Esophagus muscularis mucosa (tissue), 4 donors: ENCODE measurements at regions of chr12 and their contacts with region 1.

Region 1: DNA sequence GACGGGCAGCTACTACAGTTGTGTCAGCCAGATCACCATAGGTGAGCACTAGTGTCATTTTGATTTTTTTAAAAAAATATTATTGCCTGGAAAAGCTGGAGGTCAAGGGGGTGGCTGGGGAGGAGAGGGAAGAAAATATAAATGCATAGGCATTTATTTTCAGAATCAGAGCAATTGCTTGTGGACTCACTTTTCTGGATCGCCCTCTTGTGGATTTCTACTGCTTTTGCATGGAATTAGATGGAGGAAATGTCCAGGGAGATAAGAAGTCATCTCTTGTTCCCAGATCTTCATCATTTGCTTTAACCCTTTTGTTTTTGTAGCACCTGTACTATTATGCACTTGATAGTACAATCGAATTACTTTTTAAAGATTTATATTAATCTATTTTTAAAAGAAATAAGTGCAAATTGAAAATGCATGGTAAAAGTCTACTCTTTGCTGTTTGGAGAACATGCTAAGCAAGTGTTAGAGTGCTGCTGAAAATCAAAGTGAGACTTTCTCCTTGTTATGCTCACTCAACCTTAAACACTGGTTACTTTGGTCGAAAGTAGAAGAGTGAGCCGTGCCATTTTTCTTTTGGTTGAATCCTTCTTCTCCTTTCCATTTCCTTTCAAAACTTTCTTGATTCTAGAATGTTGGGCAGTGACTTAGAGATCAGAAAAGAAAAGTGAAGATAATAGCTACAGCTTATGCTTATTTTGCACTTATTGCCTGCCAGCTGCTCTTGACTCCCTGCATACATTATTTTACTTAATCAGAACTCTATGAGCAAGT is 60.6 kb upstream of the ANO4 start:
- DNase-seq: no peak
- H3K4me3 ChIP-seq: no peak overlapping the region
- H3K27ac ChIP-seq: no peak overlapping the region
- H3K4me1 ChIP-seq: no peaks in the 10 kb centered on the region
- H3K27me3 ChIP-seq: peaks cover 0 to 12% (median 0%) of the 10 kb centered on the region in 4 donors
- CTCF ChIP-seq: peak; percentile 28 to 40 (median 38)
- EP300 ChIP-seq: no peak
- POLR2A ChIP-seq: no peak

Region 2: GRCh38 chr12:100243137-100243536 is 490.9 kb before region 1 on chr12:
- intact Hi-C with region 1: loop called (anchors 5 kb)
- DNase-seq: no peak
- H3K4me3 ChIP-seq: no peak overlapping the region
- H3K27ac ChIP-seq: no peak overlapping the region
- H3K4me1 ChIP-seq: no peaks in the 10 kb centered on the region
- H3K27me3 ChIP-seq: no peaks in the 10 kb centered on the region
- CTCF ChIP-seq: no peak
- EP300 ChIP-seq: no peak
- POLR2A ChIP-seq: no peak

Region 3: GRCh38 chr12:100356644-100357223 is 377.3 kb before region 1 on chr12 and contains the start of gene SLC17A8:
- intact Hi-C with region 1: loop called (anchors 10 kb)
- DNase-seq: no peak
- H3K4me3 ChIP-seq: no peak within 1 kb of the TSS
- H3K27ac ChIP-seq: no peak within 1 kb of the TSS
- H3K4me1 ChIP-seq: no peaks in the 10 kb centered on the region
- H3K27me3 ChIP-seq: peaks cover 0 to 21% (median 0%) of the 10 kb centered on the region in 4 donors
- CTCF ChIP-seq: no peak
- EP300 ChIP-seq: no peak
- POLR2A ChIP-seq: no peak
- total RNA-seq, gene SLC17A8: not detected

Region 4: DNA sequence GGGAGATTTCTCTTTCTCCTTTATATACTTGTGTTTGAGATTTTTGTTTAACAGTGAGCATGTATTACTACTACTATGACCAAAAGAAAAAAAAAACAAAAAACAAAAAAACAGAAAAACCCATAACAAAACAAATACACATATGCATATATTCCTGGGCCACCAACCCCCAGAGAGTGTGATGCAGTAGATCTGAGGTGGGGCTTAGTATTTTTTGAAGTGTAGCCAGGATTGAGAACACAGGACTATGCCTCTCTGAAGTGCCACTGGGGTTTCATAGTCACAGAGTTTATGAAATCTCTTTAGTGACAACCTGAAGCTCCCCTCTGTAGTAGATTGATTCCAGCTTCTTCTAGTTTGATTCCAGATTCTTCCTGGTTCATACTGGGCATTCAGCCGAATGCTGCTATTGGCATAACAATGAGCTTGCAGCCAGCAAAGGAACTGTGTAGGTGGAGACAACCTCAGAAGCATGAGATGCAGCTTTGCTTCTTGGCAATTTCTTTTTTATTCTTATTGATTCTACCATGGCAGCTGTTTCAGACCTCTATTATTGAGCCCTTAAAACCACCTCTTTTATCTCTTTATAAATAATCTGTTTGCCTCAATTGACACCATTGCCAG is 45.1 kb after region 1 on chr12:
- intact Hi-C with region 1: no loop called
- DNase-seq: no peak
- H3K4me3 ChIP-seq: no peak overlapping the region
- H3K27ac ChIP-seq: no peak overlapping the region
- H3K4me1 ChIP-seq: no peaks in the 10 kb centered on the region
- H3K27me3 ChIP-seq: peaks cover 0 to 16% (median 0%) of the 10 kb centered on the region in 4 donors
- CTCF ChIP-seq: no peak
- EP300 ChIP-seq: no peak
- POLR2A ChIP-seq: no peak